ENCODE measurements at regions of chr1 and their contacts with region 1.

Region 1: GRCh38 chr1:78617615-78618026 is 2.6 kb upstream of the IFI44L start:
- H3K4me3 ChIP-seq: no peak overlapping the region
- H3K27ac ChIP-seq: no peak overlapping the region
- H3K4me1 ChIP-seq: peaks cover 11% of the 10 kb centered on the region
- CTCF ChIP-seq: peak; percentile 59; the same call in 1 of the 2 replicates

Region 2: DNA sequence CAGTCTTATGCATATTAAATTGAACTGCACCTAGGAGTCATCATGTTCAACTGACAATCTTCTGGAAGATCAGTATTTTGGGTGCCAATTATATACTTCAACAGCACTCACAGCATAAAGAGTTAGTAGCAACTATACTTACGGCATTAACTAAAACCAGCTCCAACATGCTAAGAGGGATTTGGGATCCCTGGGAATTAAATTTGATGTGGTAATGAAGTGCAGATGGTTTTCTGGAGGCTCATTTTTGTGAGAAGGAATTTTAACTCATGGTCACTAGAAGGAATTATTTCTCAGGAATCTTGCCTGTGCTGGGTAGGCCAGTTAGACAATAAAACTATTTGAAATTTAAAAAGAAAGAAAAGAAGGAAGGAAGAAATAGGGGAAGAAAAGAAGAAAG is 50.3 kb after region 1 on chr1:
- CTCF ChIA-PET with region 1: interaction called, 11 read pairs
- POLR2A ChIA-PET with region 1: no interaction called
- H3K4me3 ChIP-seq: no peak overlapping the region
- H3K27ac ChIP-seq: no peak overlapping the region
- H3K4me1 ChIP-seq: no peaks in the 10 kb centered on the region
- CTCF ChIP-seq: no peak

Region 3: DNA sequence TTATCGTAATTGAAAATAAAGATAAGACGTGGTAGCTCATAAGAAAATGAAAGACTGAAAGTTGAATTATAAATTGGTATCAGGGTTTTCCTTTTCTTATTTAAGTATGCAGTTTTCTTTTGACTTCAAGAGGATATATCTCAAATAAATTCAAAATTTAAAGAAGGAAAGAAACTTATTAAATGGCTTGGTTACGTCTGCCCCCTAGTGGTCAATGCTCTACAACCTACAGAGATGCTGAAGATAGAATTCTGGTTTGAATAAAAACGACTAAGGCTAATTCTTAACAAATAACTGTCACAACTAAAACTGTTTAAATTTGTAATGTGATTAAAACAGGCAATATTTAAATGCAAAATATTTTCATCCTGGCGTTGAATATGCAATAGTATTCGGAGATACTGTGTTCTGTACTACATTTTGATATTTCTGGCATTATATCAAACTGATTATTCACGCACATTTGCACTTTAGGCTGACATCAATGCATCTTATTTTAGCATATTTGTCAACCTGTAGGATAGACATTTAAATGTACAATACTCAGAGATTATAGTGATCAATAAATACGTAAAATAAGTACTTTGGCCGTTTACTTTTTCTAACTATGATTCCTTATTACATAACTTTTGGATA is 58.8 kb after region 1 on chr1:
- CTCF ChIA-PET with region 1: interaction called, 14 read pairs
- POLR2A ChIA-PET with region 1: no interaction called
- H3K4me3 ChIP-seq: no peak overlapping the region
- H3K27ac ChIP-seq: no peak overlapping the region
- H3K4me1 ChIP-seq: no peaks in the 10 kb centered on the region
- CTCF ChIP-seq: no peak

Region 4: DNA sequence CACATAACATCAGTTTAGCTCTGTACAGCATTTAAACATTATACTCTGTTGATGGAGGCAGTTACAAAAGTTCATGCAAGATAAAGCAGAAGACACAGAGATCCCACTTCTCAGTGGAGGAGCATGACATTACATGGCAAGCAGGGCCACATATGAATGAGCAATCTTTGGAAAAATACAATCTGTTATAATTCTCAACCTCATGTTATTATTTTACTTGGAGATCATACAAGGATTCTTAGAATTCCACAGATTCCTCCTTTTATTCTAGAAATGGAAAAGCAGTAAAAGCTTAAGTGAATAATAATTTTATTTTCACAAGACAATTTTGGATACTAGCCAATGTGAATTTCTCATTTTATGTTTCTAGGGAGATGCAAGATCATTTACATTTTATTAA is 98.6 kb after region 1 on chr1:
- CTCF ChIA-PET with region 1: no interaction called
- POLR2A ChIA-PET with region 1: no interaction called
- H3K4me3 ChIP-seq: no peak overlapping the region
- H3K27ac ChIP-seq: no peak overlapping the region
- H3K4me1 ChIP-seq: no peaks in the 10 kb centered on the region
- CTCF ChIP-seq: no peak